GM18951 (cell line): ENCODE measurements at regions of chr9 and their contacts with region 1.

Region 1: GRCh38 chr9:121335146-121335592 is 34.9 kb downstream of the STOM start:
- POLR2A ChIP-seq: no peak

Region 2: DNA sequence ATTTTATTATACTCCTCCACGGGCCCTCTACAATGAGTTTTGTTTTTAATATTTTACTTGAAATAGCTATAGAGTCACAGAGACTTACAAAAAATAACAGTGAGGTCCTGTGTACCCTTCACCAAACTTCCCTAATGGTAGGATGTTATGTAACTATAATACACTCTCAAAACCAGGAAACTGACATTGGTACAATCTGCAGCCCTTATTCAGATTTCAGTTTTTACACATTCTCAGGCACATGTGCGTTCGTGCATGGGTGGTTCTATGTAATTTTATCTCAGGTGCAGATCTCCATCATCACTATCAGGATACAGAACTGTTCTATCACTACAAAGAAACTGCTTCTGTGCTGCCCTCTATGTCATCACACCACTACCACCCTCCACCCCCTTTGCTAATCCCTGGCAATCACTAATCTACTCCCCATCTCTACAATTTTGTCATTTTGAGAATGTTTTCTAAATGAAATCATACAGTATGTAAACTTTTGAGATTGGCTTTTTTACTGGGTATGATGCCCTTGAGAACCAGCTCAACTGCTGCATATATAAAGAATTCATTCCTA is 149.9 kb before region 1 on chr9:
- in situ Hi-C with region 1: no loop called
- POLR2A ChIP-seq: no peak

Region 3: GRCh38 chr9:121383715-121384114 is 48.5 kb after region 1 on chr9:
- in situ Hi-C with region 1: loop called (anchors 5 kb)
- POLR2A ChIP-seq: no peak